ENCODE measurements at regions of chr20 and their contacts with region 1.

Region 1: DNA sequence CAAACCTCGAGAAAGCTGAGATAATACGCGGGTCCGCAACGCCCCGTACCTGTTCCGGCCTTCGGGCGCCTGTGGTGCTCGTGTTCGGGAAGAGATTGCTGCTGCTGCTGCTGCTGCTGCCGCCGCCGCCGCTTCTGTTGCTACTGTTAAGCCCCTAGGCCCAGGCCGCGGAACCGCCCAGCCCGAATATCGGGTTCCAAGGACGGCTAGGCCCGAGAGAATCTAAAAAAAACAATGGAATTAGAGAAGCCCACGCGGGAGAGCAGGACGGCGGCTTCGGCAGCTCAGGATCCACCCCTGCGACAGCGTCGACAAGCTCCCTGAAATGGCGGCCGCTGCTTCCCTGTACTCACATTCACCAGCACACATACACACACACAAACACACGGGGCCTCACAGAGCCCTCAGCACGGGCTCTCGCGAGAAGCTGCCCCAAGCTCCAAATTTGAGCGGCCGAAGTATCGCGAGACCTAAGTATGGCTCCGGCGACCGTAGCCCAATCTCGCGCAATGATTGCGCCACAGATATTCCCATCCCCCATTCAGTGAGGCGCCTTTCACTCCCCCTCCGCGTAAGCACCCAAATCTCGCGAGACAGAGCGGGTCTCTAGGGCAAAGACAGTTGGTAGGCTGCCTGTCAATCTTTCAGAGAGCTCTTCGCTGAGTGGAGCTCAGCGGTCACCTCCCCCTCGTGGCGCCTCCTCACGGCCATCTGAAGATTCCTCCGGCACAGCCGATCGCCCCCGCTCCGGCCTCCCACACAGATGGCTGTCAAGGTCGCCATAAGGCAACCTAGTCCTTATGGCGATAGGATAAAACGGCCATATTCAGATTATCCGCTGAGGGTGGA is at the start of gene RBM39:
- DNase-seq: peak; percentile 95
- ATAC-seq: peak; percentile 87
- H3K4me3 Mint-ChIP-seq: peak within 1 kb of the TSS; percentile 94
- H3K27ac Mint-ChIP-seq: peak within 1 kb of the TSS; percentile 98
- H3K4me1 Mint-ChIP-seq: peaks cover 38% of the 10 kb centered on the region
- H3K27me3 Mint-ChIP-seq: no peaks in the 10 kb centered on the region
- total RNA-seq, gene RBM39: 478 to 499 TPM

Region 2: DNA sequence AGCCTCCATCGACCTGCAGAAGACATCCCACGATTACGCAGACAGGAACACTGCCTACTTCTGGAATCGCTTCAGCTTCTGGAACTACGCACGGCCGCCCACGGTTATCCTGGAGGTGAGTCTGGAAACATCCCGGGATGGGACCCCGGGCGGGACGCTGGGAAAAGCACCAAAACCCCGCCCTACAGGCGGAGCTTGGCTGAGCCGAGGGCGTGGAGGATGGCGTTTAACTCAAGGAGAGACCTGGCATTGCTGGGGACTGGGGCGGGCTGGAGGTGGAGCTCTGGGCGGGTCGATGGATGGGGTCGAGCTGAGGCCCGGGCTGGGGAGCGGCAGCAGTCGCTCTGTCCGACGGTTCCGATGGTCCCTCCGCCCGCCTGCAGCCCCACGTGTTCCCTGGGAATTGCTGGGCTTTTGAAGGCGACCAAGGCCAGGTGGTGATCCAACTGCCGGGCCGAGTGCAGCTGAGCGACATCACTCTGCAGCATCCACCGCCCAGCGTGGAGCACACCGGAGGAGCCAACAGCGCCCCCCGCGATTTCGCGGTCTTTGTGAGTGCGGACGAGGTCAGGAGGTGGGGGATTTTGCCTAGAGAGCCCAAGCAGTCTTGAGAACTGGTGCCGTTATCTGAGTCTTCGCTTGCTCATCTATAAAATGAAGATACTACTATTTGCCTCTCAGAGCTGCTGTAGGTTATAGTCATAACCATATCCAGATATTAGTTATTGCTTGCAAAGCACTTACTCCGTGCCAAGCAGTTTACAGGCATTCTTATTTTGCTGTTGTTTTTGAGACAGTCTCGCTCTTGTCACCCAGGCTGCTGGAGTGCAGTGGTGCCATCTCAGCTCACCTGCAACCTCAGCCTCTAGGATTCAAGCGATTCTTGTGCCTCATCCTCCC is 122.7 kb before region 1 on chr20:
- POLR2A ChIA-PET with region 1: interaction called, 45 read pairs
- DNase-seq: peak; percentile 83
- ATAC-seq: peak; percentile 41
- H3K4me3 Mint-ChIP-seq: peak overlapping the region; percentile 86
- H3K27ac Mint-ChIP-seq: peak overlapping the region; percentile 80
- H3K4me1 Mint-ChIP-seq: peaks cover 18% of the 10 kb centered on the region
- H3K27me3 Mint-ChIP-seq: no peaks in the 10 kb centered on the region

Region 3: GRCh38 chr20:35699127-35699975 is 42.8 kb before region 1 on chr20 and contains the starts of genes NFS1 and ROMO1:
- POLR2A ChIA-PET with region 1: interaction called, 21 read pairs
- DNase-seq: peak; percentile 88
- ATAC-seq: peak; percentile 91
- H3K4me3 Mint-ChIP-seq: peak within 1 kb of the TSS; percentile 93
- H3K27ac Mint-ChIP-seq: peak within 1 kb of the TSS; percentile 92
- H3K4me1 Mint-ChIP-seq: peaks cover 26% of the 10 kb centered on the region
- H3K27me3 Mint-ChIP-seq: no peaks in the 10 kb centered on the region
- total RNA-seq, gene NFS1: 33.1 to 33.8 TPM
- total RNA-seq, gene ROMO1: 96.9 to 112 TPM

Region 4: DNA sequence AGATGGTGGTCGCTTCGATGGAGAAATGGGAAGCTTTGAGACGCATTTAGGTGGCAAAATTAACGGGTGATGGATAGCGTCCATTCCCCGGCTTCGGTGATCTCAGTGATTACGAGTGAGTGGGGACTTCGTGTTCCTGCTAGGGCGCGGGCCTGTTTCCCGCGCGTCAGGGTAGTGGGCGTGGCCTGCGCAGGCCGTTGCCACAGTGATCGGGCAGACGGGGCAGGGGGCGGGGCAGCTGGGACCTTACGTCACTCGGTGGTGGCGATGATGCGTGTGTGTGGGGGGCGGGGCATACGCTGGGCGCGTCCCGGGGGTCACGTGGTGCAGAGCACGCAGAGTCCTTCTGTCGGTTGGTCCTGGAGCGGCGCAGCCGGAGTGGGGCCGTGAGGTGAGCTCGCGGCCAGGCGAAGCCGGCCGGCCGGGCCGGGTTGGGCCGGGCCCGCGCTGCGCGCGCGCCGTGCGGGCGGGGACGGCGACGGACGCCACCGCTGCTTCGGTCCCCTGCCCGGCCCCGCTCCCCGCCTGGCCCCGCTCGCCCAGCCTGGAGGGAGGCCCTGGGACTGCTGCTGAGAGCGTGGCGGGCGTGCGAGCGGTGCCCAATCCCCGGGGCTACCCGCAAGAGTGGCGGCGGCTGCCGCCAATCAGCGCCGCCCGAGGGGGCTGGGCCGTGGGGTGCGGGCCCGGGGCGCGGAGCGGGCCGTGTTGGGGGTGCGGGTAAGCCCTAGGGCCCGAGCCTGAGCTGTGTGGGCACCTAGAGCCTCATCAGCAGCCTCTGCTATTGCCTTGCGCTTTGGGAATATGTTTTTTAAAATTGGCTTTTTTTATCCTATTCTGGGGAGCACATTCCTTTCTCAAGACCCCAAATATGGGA is 29.8 kb after region 1 on chr20 and contains the start of gene PHF20:
- POLR2A ChIA-PET with region 1: interaction called, 437 read pairs
- DNase-seq: peak; percentile 99
- ATAC-seq: peak; percentile 92
- H3K4me3 Mint-ChIP-seq: peak within 1 kb of the TSS; percentile 90
- H3K27ac Mint-ChIP-seq: peak within 1 kb of the TSS; percentile 95
- H3K4me1 Mint-ChIP-seq: peaks cover 54% of the 10 kb centered on the region
- H3K27me3 Mint-ChIP-seq: no peaks in the 10 kb centered on the region
- total RNA-seq, gene PHF20: 61.9 to 69.4 TPM

Region 5: GRCh38 chr20:35883778-35884540 is 141.8 kb after region 1 on chr20:
- POLR2A ChIA-PET with region 1: interaction called, 23 read pairs
- DNase-seq: peak; percentile 57
- ATAC-seq: peak; percentile 93
- H3K4me3 Mint-ChIP-seq: no peak overlapping the region
- H3K27ac Mint-ChIP-seq: peak overlapping the region; percentile 22
- H3K4me1 Mint-ChIP-seq: peaks cover 11% of the 10 kb centered on the region
- H3K27me3 Mint-ChIP-seq: no peaks in the 10 kb centered on the region